Dorsolateral prefrontal cortex (tissue), 120 donors: ENCODE measurements at regions of chr5 and their contacts with region 1.

Region 1: GRCh38 chr5:164013077-164013670 is 507.8 kb downstream of the MAT2B start:
- DNase-seq: peak in 3 of 10 donors; percentile 6 to 45 (median 29)
- H3K4me3 ChIP-seq: no peak overlapping the region
- H3K27ac ChIP-seq: no peak overlapping the region
- H3K27me3 ChIP-seq: peaks cover 0 to 3% (median 0%) of the 10 kb centered on the region in 45 donors
- CTCF ChIP-seq: peak; percentile 52 to 89 (median 74)

Region 2: GRCh38 chr5:165209086-165209727 is 1196.0 kb after region 1 on chr5:
- intact Hi-C with region 1: loop called in 1 of 2 experiments (anchors 10 kb)
- DNase-seq: no peak
- H3K4me3 ChIP-seq: no peak overlapping the region
- H3K27ac ChIP-seq: no peak overlapping the region
- H3K27me3 ChIP-seq: no peaks in the 10 kb centered on the region
- CTCF ChIP-seq: peak; percentile 58 to 89 (median 77)

Region 3: GRCh38 chr5:165457859-165458481 is 1444.8 kb after region 1 on chr5:
- intact Hi-C with region 1: loop called in 1 of 2 experiments (anchors 10 kb)
- DNase-seq: no peak
- H3K4me3 ChIP-seq: no peak overlapping the region
- H3K27ac ChIP-seq: no peak overlapping the region
- H3K27me3 ChIP-seq: peaks cover 0 to 6% (median 0%) of the 10 kb centered on the region in 45 donors
- CTCF ChIP-seq: peak in 51 of 56 donors; percentile 10 to 62 (median 41)